Activated B cell treated with CpG ODN at 0.5 μM for 24 hours (primary cell): ENCODE measurements at regions of chr19 and their contacts with region 1.

Region 1: GRCh38 chr19:19865739-19866481 is at the start of gene ZNF253:
- DNase-seq: peak; percentile 82
- ATAC-seq: peak; percentile 90
- H3K4me3 Mint-ChIP-seq: peak within 1 kb of the TSS; percentile 100
- H3K27ac Mint-ChIP-seq: peak within 1 kb of the TSS; percentile 99
- H3K4me1 Mint-ChIP-seq: peaks cover 34% of the 10 kb centered on the region
- H3K27me3 Mint-ChIP-seq: no peaks in the 10 kb centered on the region
- CTCF ChIP-seq: no peak
- total RNA-seq, gene ZNF253: 24.7 and 26.3 TPM in 2 replicates

Region 2: GRCh38 chr19:19821366-19821951 is 44.5 kb before region 1 on chr19 and contains the start of gene ZNF506:
- CTCF ChIA-PET with region 1: interaction called, 11 read pairs
- POLR2A ChIA-PET with region 1: interaction called, 107 read pairs
- intact Hi-C with region 1: loop called (anchors 1 kb)
- DNase-seq: peak; percentile 85
- ATAC-seq: peak; percentile 87
- H3K4me3 Mint-ChIP-seq: peak within 1 kb of the TSS; percentile 98
- H3K27ac Mint-ChIP-seq: peak within 1 kb of the TSS; percentile 99
- H3K4me1 Mint-ChIP-seq: peaks cover 65% of the 10 kb centered on the region
- H3K27me3 Mint-ChIP-seq: no peaks in the 10 kb centered on the region
- CTCF ChIP-seq: no peak
- total RNA-seq, gene ZNF506: 67.1 and 78.6 TPM in 2 replicates

Region 3: DNA sequence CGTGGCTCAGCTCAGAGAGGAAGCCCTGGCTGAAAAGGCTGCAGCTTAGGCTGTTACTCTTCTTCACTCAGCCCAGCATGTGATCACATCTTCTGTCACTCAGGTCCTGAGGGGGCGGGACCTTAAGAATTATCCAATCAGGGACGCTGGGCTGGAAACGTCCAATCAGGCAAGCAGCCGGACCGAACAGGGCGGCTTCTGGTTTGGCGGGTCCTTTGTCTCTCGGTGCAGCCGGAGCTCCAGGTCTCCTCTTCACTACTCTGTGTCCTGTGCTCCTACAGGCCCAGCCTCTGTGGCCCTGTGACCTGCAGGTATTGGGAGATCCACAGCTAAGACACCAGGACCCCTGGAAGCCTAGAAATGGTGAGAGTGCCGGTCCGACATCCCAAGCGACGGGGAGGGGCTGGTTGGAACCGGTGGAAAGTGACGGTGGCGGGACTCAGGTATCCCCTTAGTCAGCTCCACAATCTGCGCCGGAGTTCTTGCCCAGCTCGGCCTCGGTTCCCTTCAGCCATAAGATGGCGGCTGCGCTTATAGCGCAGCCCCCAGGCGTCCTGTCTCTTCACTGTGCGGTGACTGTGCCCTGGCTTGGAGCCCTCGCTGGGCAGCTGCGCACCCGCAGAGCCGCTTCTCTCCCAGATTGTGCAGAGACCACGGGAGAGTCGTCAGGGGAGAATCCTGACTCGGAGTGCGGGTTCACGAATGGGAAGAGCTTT is 35.0 kb after region 1 on chr19 and contains the start of gene ZNF93:
- CTCF ChIA-PET with region 1: no interaction called
- POLR2A ChIA-PET with region 1: interaction called, 43 read pairs
- intact Hi-C with region 1: loop called (anchors 1 kb)
- DNase-seq: peak; percentile 74
- ATAC-seq: peak; percentile 97
- H3K4me3 Mint-ChIP-seq: peak within 1 kb of the TSS; percentile 98
- H3K27ac Mint-ChIP-seq: peak within 1 kb of the TSS; percentile 91
- H3K4me1 Mint-ChIP-seq: peaks cover 34% of the 10 kb centered on the region
- H3K27me3 Mint-ChIP-seq: no peaks in the 10 kb centered on the region
- CTCF ChIP-seq: no peak
- total RNA-seq, gene ZNF93: 13.5 and 14.9 TPM in 2 replicates

Region 4: GRCh38 chr19:20039203-20039723 is 173.4 kb after region 1 on chr19 and contains the start of gene ZNF682:
- CTCF ChIA-PET with region 1: no interaction called
- POLR2A ChIA-PET with region 1: interaction called, 10 read pairs
- intact Hi-C with region 1: no loop called
- DNase-seq: peak; percentile 85
- ATAC-seq: peak; percentile 100
- H3K4me3 Mint-ChIP-seq: peak within 1 kb of the TSS; percentile 98
- H3K27ac Mint-ChIP-seq: peak within 1 kb of the TSS; percentile 92
- H3K4me1 Mint-ChIP-seq: peaks cover 14% of the 10 kb centered on the region
- H3K27me3 Mint-ChIP-seq: no peaks in the 10 kb centered on the region
- CTCF ChIP-seq: no peak
- total RNA-seq, gene ZNF682: 15.5 and 19.9 TPM in 2 replicates